ENCODE measurements at regions of chr7 and their contacts with region 1.

Region 1: GRCh38 chr7:113698556-113699220 is 220.1 kb downstream of the PPP1R3A start:
- DNase-seq: no peak
- ATAC-seq: no peak

Region 2: DNA sequence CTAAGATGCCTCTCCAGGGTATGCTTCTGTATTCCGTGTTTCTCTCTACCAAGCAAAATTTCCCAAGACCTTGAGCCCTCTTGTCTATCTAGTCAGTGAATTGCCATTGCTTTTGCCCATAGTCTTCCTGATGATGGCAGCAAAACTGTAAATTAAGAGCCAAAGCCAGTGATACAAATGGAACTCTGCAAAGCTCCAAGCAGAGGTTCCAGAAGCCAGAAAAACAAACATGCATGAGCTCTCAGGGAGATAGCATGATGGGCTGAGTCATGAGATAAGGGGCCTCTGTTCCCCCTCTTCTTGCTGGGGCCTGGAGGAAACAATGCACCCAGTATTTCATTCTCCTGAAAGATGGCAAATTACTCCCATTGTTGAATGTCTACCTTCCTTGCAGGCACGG is 1193.2 kb before region 1 on chr7:
- intact Hi-C with region 1: loop called (anchors 5 kb)
- DNase-seq: no peak
- ATAC-seq: no peak

Region 3: GRCh38 chr7:113491305-113491704 is 207.4 kb before region 1 on chr7:
- intact Hi-C with region 1: no loop called
- DNase-seq: no peak
- ATAC-seq: no peak

Measured in sciatic nerve (tissue), 2 donors.